ENCODE measurements at regions of chrX and their contacts with region 1.

Region 1: GRCh38 chrX:40647307-40648197 is at the start of gene CXorf38:
- DNase-seq: peak; percentile 76 to 98 (median 82)

Region 2: DNA sequence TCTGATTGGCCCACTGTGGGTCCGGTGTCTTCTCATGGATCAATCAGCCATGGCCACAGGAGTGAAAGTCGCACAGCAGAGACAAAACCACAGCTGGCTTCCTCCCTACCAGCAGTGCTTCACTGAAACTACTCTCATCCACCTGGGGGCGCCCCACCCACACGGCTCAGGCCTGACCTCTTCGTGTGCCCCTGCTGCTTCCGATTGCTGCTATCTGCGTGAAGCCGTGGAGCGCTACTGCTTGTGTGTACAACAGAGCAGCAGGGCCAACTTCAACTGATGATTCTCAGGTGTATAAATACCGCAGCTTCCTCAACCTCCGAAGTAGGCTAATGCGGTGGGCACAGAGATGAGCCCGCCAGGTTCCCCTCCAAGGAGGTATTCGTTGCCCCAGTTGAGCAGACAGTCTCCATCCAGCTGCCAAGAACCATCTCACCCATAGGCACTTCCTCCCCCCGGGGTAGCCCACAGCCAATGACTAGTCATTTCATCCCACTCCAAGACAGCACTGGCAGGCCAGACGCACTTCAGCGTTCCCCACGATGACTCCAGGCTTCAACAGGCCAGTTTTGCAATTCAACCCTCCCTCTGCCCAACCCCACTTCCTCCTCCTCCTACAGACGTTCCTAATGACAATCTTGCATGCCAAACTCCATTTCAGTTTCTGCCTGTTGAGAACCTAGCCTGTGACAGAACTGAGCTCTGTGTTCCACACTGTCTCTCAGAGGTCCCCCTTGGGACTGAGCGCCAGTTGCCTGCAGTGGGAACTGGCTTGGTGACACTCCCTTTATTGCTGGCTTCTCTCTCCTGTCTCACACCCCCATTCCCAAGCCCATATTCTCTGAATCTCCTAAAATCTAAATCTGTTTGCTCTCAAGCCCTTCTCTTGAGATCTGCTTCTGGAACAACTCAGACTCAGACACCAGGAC is 108.1 kb before region 1 on chrX:
- intact Hi-C with region 1: loop called (anchors 10 kb)
- DNase-seq: no peak

Region 3: GRCh38 chrX:40580537-40581335 is 66.8 kb before region 1 on chrX and contains the start of gene ATP6AP2:
- intact Hi-C with region 1: no loop called
- DNase-seq: peak; percentile 86 to 98 (median 92)

Region 4: DNA sequence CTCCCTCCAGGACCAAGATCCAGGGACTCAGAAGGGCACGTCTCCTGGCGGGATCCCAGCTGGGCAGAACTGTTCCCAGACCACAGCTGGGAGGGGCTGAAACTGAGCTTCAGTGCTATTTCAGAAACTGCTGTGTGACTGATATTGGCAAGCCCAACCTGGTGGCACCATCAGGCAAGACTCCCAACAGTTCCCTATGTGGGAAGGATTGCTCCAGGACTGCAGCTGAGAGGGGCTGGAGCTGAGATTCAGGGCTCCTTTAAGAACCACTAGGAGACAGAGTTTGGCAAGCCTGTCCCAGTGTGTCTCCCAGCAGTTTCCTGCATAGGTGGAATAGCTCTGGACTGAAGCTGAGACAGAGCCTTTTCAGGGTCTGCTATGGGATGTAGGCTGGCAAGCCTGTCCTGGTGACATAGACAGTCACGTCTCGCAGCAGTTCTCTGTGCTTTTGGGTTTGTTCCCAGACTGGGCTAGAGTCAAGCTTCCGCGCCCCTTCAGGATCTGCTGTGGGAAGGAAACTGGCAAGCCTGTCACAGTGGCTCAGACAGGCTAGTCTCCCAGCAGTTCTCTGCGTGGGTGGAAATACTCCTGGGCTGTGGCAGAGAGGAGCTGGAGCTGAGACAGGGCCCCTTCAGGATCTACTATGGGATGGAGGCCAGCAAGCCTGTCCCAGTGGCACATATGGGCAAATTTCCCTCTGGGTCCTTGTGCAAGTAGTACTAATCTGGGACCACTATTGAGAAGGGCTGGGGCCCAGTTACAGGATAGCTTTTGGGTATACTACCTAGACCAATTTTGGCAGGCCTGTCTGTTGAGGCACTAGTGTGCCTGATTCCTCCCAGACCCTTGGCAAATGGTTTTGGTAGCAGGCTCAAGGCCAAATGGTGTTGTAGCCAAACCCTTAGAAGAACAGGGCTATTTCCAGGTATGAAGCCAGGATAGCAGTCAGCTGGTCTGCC is 108.0 kb after region 1 on chrX:
- intact Hi-C with region 1: no loop called
- DNase-seq: peak in 9 of 10 donors; percentile 19 to 88 (median 35)

Region 5: GRCh38 chrX:40792433-40792832 is 144.9 kb after region 1 on chrX:
- intact Hi-C with region 1: loop called (anchors 2 kb)
- DNase-seq: no peak

Region 6: GRCh38 chrX:40816906-40817305 is 169.4 kb after region 1 on chrX:
- intact Hi-C with region 1: no loop called
- DNase-seq: no peak

Region 7: GRCh38 chrX:41084044-41084892 is 436.7 kb after region 1 on chrX:
- intact Hi-C with region 1: loop called (anchors 10 kb)
- DNase-seq: peak; percentile 78 to 99 (median 93)

Region 8: DNA sequence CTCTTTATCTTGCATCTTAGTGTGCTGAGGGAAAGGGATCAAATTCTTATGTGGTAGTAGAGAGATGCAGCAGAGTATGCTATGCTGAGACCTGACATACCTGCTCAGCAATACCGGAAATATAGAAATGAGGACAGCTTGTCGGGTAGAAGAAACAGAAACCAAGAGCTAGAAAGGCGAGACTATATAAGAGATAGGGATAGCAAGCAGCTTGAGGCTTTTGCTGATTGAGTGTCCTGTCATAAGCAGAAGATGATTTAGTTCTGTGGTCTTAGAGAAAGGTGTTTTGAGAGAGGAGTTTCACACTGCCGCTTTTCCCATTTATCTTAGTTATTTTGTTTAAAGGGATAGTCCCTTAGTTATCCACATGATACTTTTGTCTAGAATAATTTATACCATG is 469.4 kb after region 1 on chrX:
- intact Hi-C with region 1: loop called (anchors 5 kb)
- DNase-seq: no peak